HepG2 (cell line): ENCODE measurements at regions of chr1 and their contacts with region 1.

Region 1: DNA sequence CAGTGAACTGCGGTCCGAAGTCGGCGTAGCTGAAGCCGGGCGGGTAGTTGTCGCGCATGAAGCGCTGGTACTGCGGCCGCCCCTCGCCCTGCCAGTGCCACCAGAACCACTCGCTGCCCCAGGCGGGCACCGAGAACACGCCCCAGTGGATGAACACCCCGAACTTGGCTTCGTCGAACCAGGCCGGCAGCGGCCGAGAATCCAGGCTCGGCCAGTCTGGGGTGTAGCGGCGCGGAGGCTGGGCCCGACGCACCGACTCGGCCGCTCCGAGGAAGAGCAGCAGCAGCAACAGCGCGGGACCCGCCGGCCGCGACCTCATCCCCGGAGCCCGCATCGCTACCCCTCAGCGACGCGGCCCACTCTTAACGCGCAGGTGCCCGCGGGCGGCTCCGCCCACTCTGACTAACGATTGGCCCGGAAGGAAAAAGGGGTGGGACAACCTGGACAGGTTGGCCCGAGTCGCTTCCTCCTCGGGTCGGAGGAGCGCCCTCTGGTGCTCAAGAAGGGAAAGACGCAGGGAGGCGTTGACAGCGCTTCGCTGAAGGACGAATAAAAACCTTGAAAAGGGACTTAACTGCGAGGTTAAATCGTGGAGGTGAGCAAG is at the start of gene FUCA1:
- DNase-seq: peak; percentile 89
- ATAC-seq: peak; percentile 96
- H3K4me3 ChIP-seq: peak within 1 kb of the TSS; percentile 67 to 81 (median 81)
- H3K27ac ChIP-seq: peak within 1 kb of the TSS; percentile 37
- H3K4me1 ChIP-seq: peaks cover 33% of the 10 kb centered on the region
- H3K27me3 ChIP-seq: no peaks in the 10 kb centered on the region; a peak in 2 of 5 replicates
- CTCF ChIP-seq: peak; percentile 93
- EP300 ChIP-seq: no peak
- POLR2A ChIP-seq: peak in 1 of 2 experiments; percentile 91; a peak in 2 of 4 replicates
- RAD21 ChIP-seq: peak; percentile 68
- total RNA-seq, gene FUCA1: 14.9 and 33.6 TPM in 2 replicates

Region 2: GRCh38 chr1:23800400-23801337 is 67.4 kb before region 1 on chr1 and contains the start of gene GALE:
- CTCF ChIA-PET with region 1: interaction called, 3 read pairs
- POLR2A ChIA-PET with region 1: interaction called, 11 read pairs
- in situ Hi-C with region 1: loop called (anchors 5 kb)
- intact Hi-C with region 1: loop called (anchors 5 kb)
- DNase-seq: peak; percentile 89
- ATAC-seq: peak; percentile 75
- H3K4me3 ChIP-seq: peak within 1 kb of the TSS; percentile 65 to 92 (median 90)
- H3K27ac ChIP-seq: peak within 1 kb of the TSS; percentile 95
- H3K4me1 ChIP-seq: peaks cover 66% of the 10 kb centered on the region
- H3K27me3 ChIP-seq: no peaks in the 10 kb centered on the region; a peak in 1 of 5 replicates
- CTCF ChIP-seq: no peak
- EP300 ChIP-seq: peak in 1 of 2 experiments; percentile 34; a peak in 1 of 4 replicates
- POLR2A ChIP-seq: peak in 1 of 2 experiments; percentile 59; a peak in 2 of 4 replicates
- RAD21 ChIP-seq: peak; percentile 60; the same call in 1 of the 2 replicates
- total RNA-seq, gene GALE: 85.2 and 86.6 TPM in 2 replicates

Region 3: GRCh38 chr1:23889074-23889473 is 21.0 kb after region 1 on chr1:
- CTCF ChIA-PET with region 1: no interaction called
- POLR2A ChIA-PET with region 1: no interaction called
- in situ Hi-C with region 1: no loop called
- intact Hi-C with region 1: no loop called
- DNase-seq: no peak
- ATAC-seq: no peak
- H3K4me3 ChIP-seq: no peak overlapping the region
- H3K27ac ChIP-seq: no peak overlapping the region
- H3K4me1 ChIP-seq: no peaks in the 10 kb centered on the region
- H3K27me3 ChIP-seq: peaks cover 3 to 6% of the 10 kb centered on the region in 2 experiments; a peak in 3 of 5 replicates
- CTCF ChIP-seq: no peak
- EP300 ChIP-seq: no peak
- POLR2A ChIP-seq: no peak
- RAD21 ChIP-seq: no peak

Region 4: DNA sequence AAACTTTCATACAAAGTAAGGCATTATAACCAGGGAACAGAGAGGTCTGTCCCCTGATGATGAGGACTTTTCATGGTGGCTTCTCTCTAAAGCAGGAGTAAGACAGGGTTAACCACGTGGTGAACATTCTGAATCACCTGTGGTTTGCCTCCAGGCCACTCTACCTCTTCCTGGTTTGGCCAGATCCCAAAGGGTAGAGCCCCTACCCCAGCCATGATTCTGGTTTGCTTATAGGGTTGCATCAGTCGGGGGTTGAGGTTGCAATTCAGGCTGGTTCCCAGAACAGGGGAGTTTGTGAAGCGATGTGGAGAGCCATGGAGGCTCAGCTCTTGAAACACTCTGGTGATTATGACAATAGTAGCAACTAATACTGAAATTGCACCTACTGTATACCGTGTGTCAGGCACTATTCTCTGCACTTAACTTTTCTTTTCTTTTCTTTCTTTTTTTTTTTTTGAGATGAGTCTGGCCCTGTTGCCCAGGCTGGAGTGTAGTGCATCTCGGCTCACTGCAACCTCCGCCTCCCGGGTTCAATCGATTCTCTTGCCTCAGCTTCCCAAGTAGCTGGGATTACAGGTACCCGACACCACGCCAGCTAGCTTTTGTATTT is 36.8 kb after region 1 on chr1:
- CTCF ChIA-PET with region 1: no interaction called
- POLR2A ChIA-PET with region 1: no interaction called
- in situ Hi-C with region 1: no loop called
- intact Hi-C with region 1: no loop called
- DNase-seq: no peak
- ATAC-seq: no peak
- H3K4me3 ChIP-seq: no peak overlapping the region
- H3K27ac ChIP-seq: no peak overlapping the region
- H3K4me1 ChIP-seq: peaks cover 13% of the 10 kb centered on the region
- H3K27me3 ChIP-seq: peaks cover 1 to 39% of the 10 kb centered on the region in 2 experiments; a peak in 4 of 5 replicates
- CTCF ChIP-seq: no peak
- EP300 ChIP-seq: no peak
- POLR2A ChIP-seq: no peak
- RAD21 ChIP-seq: no peak